ENCODE measurements at regions of chr1 and their contacts with region 1.

Region 1: DNA sequence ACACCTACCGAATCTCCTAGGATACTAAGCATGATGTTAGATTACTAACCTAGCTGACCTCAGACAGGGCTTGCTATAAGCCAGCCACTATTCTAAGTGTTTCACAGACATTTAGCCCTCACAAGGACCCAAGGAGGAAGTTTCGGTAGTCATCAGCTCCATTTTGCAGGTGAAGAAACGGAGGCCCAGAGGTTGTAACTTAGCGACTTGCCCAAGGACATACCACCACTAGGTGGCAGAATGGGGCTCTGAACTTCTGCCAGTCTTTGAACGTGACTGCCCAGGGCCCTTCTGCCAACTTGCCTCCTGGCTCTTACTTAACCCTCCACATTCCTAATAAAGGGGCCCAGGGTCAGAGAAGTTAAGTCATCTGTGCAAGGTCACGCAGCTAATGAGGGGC is 283.5 kb downstream of the C1orf94 start:
- DNase-seq: peak; percentile 71
- H3K4me3 Mint-ChIP-seq: no peak overlapping the region
- H3K27ac Mint-ChIP-seq: no peak overlapping the region
- H3K4me1 Mint-ChIP-seq: no peaks in the 10 kb centered on the region
- H3K27me3 Mint-ChIP-seq: peaks cover 7% of the 10 kb centered on the region

Region 2: GRCh38 chr1:34597877-34598514 is 137.8 kb after region 1 on chr1:
- CTCF ChIA-PET with region 1: interaction called, 9 read pairs
- intact Hi-C with region 1: loop called (anchors 2 kb)
- DNase-seq: peak; percentile 73
- H3K4me3 Mint-ChIP-seq: no peak overlapping the region
- H3K27ac Mint-ChIP-seq: no peak overlapping the region
- H3K4me1 Mint-ChIP-seq: no peaks in the 10 kb centered on the region
- H3K27me3 Mint-ChIP-seq: peaks cover 17% of the 10 kb centered on the region

Region 3: DNA sequence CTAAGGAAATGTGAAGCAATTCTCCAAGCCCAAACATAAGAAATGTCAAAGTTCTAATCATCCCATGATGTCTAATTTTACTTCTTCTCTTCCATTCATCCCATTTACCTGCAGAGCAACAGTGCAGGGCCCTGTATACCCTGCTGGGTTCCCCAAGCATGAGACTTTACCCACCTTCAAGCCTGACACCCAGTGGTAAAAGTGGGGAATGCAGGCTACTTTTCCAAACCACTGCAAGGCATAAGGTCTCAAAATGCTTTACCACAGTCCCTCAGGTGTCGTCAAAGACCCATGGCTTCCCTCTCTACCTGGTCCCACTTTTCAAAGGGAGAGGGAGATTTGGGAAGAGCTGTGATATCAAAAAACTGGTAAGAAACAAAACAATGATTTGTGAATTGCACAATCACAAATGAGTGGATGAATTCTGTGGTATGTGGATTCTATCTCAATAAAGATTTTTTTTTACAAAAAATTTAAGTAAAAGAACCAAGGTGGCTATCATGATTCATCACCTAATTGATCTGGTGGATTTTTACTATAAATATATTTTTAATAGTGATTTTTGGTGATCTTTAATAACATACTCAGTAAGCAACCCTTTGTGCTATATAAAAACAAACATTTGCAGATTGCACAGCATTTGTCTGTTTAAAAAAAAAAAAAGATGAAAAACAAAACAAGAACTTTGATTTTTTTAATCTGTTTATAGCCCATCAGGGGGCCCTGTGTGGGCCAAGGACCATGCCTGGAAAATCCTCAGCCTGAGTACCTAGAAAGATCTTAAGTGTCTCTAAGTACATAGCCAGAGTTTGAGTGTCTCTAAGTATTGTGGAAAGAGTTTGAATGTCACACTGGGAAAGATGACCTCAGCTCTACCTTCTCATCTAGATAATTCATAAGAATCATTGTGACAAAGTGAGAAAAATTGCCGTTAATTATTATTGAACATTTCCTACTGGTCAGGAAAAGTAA is 221.6 kb after region 1 on chr1:
- CTCF ChIA-PET with region 1: no interaction called
- intact Hi-C with region 1: loop called (anchors 2 kb)
- DNase-seq: peak; percentile 76
- H3K4me3 Mint-ChIP-seq: no peak overlapping the region
- H3K27ac Mint-ChIP-seq: no peak overlapping the region
- H3K4me1 Mint-ChIP-seq: peaks cover 10% of the 10 kb centered on the region
- H3K27me3 Mint-ChIP-seq: peaks cover 10% of the 10 kb centered on the region

Region 4: GRCh38 chr1:34742667-34743270 is 282.6 kb after region 1 on chr1:
- CTCF ChIA-PET with region 1: interaction called, 14 read pairs
- intact Hi-C with region 1: loop called (anchors 1 kb)
- DNase-seq: peak; percentile 86
- H3K4me3 Mint-ChIP-seq: no peak overlapping the region
- H3K27ac Mint-ChIP-seq: no peak overlapping the region
- H3K4me1 Mint-ChIP-seq: no peaks in the 10 kb centered on the region
- H3K27me3 Mint-ChIP-seq: no peaks in the 10 kb centered on the region